SK-N-SH (cell line): ENCODE measurements at regions of chr3 and their contacts with region 1.

Region 1: GRCh38 chr3:148379763-148380382 is 317.8 kb upstream of the AGTR1 start:
- DNase-seq: peak; percentile 18
- H3K4me3 ChIP-seq: no peak overlapping the region; a peak in 1 of 4 replicates
- H3K27ac ChIP-seq: no peak overlapping the region
- H3K4me1 ChIP-seq: no peaks in the 10 kb centered on the region; a peak in 1 of 4 replicates
- H3K27me3 ChIP-seq: no peaks in the 10 kb centered on the region
- CTCF ChIP-seq: peak; percentile 65
- EP300 ChIP-seq: no peak
- RAD21 ChIP-seq: peak; percentile 86

Region 2: GRCh38 chr3:148329481-148330235 is 50.2 kb before region 1 on chr3:
- CTCF ChIA-PET with region 1: no interaction called
- POLR2A ChIA-PET with region 1: no interaction called
- DNase-seq: no peak
- H3K4me3 ChIP-seq: no peak overlapping the region
- H3K27ac ChIP-seq: no peak overlapping the region
- H3K4me1 ChIP-seq: peaks cover 0 to 8% of the 10 kb centered on the region in 2 experiments; a peak in 2 of 4 replicates
- H3K27me3 ChIP-seq: no peaks in the 10 kb centered on the region
- CTCF ChIP-seq: no peak
- EP300 ChIP-seq: no peak
- RAD21 ChIP-seq: no peak

Region 3: DNA sequence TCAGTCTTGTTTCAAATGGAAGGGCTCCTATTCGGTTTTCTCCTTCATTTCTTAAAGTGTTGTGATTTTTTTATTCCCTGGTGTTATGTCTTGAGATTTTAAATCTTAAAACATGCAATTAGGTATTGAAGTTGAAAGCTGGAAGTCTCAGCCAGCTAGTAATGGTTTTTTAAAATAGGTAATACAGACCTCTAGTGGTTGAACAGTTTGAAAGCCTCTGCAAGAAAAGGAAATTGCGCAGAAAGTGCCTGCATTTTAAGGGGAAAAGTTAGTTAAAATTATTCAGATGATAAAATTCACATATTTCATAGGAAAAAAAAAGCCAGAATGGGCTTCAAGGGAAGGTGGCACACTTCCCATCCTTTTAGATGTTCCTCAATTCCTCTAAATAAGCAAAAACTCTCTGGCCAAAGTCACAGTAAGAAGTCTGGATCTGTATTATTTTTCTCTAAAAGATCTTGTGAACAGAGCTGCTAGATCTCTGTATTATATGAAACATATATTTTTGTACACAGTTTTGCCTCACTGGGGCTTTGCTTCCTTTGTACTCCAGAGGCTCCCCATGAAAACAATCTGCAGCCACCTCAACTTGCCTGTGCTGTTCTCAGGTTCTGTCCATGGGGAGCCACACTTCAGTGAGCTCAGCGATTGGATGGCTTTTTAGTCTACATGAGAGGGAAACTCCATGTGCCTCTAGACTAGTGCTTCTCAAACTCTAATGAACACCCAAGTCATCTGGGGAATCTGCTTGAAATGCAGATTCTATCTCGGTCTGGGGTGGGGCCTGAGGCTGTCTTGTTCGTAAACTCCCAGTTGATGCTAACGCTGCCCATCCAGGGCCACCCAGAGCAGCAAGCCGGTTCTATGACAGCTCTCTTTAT is 339.3 kb after region 1 on chr3:
- CTCF ChIA-PET with region 1: interaction called, 99 read pairs
- POLR2A ChIA-PET with region 1: no interaction called
- DNase-seq: no peak
- H3K4me3 ChIP-seq: no peak overlapping the region
- H3K27ac ChIP-seq: no peak overlapping the region
- H3K4me1 ChIP-seq: peaks cover 0 to 3% of the 10 kb centered on the region in 2 experiments; a peak in 2 of 4 replicates
- H3K27me3 ChIP-seq: no peaks in the 10 kb centered on the region
- CTCF ChIP-seq: peak; percentile 70
- EP300 ChIP-seq: no peak
- RAD21 ChIP-seq: peak; percentile 80